ENCODE measurements at regions of chr9 and their contacts with region 1.

Region 1: DNA sequence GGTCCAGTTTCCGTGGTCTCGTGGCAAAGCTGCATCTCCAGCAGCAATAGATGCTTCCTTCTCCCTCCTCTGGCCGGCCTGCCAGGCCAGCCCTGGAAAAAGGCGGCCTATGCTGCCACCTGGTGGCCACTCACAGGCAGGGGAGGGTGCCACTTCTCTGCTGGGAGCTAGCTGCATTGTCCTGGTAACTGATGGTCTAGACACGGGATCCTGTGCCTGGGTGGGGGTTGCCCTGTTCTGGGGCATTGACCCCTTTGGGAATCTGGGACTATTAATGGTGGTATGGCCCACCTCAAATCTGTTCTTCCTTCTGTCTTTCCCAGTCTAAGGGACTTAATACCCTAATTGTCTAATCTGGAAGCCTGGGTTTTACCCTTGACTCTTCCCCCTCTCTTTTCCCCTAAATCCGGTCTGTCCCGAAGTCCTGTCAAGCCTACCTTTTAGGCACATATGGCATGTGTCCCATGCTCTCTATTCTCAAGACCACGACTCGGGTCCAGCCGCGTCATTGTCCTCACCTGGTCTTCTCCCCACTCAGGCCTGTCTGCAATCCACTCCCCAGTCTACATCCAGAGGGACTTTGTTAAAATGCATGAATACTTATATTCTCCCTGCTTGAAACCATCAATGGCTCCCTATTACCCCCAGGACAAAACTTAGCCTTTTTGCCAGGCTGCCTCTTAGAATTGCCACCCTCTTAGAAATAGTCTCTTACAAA is 20.0 kb upstream of the PTGS1 start:
- DNase-seq: peak; percentile 81
- ATAC-seq: peak; percentile 86
- H3K4me3 ChIP-seq: no peak overlapping the region
- H3K4me3 Mint-ChIP-seq: no peak overlapping the region
- H3K27ac ChIP-seq: no peak overlapping the region
- H3K27ac Mint-ChIP-seq: no peak overlapping the region
- H3K4me1 ChIP-seq: peaks cover 9 to 12% of the 10 kb centered on the region in 2 donors
- H3K4me1 Mint-ChIP-seq: peaks cover 6% of the 10 kb centered on the region
- H3K27me3 ChIP-seq: peaks cover 0 to 35% (median 12%) of the 10 kb centered on the region in 4 experiments
- H3K27me3 Mint-ChIP-seq: peaks cover 30% of the 10 kb centered on the region
- CTCF ChIP-seq: peak; percentile 93

Region 2: DNA sequence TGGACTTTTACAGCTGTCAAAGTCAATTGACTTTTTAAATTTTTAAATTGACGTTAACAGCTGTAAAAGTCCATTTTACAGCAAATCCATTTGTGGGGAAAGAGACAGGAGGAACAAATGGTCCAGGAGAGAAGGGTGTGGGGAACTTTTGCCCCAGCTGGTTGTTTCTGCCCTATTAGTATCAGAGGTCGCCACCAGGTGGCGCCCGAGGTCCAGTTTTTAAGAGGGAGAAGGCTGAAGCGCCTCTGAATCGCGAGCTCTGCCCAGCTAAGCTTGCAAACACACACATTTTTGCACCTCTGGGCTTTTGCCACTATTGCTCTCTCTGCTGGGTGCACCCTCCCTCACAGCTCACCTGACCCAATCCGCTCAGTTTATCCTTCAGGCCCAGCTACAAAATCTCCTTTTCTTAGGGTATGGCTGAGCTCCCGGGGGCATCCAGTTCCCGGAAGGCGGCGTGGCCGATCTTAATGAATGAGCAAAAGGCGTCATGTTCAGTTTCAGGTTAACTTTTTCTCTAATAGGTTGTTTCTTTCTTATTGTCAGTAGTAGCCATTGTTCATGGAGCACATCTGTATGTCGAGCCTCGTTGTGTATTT is 251.4 kb before region 1 on chr9:
- CTCF ChIA-PET with region 1: interaction called, 159 read pairs
- POLR2A ChIA-PET with region 1: no interaction called
- intact Hi-C with region 1: loop called (anchors 1 kb)
- DNase-seq: peak; percentile 85
- ATAC-seq: peak; percentile 87
- H3K4me3 ChIP-seq: no peak overlapping the region
- H3K4me3 Mint-ChIP-seq: peak overlapping the region; percentile 30
- H3K27ac ChIP-seq: no peak overlapping the region
- H3K27ac Mint-ChIP-seq: no peak overlapping the region
- H3K4me1 ChIP-seq: peaks cover 10 to 11% of the 10 kb centered on the region in 2 donors
- H3K4me1 Mint-ChIP-seq: peaks cover 12% of the 10 kb centered on the region
- H3K27me3 ChIP-seq: peaks cover 0 to 7% (median 3%) of the 10 kb centered on the region in 4 experiments
- H3K27me3 Mint-ChIP-seq: peaks cover 12% of the 10 kb centered on the region
- CTCF ChIP-seq: peak; percentile 88

Region 3: GRCh38 chr9:122168356-122168755 is 182.4 kb before region 1 on chr9:
- CTCF ChIA-PET with region 1: no interaction called
- POLR2A ChIA-PET with region 1: no interaction called
- intact Hi-C with region 1: no loop called
- DNase-seq: no peak
- ATAC-seq: no peak
- H3K4me3 ChIP-seq: no peak overlapping the region
- H3K4me3 Mint-ChIP-seq: no peak overlapping the region
- H3K27ac ChIP-seq: no peak overlapping the region
- H3K27ac Mint-ChIP-seq: no peak overlapping the region
- H3K4me1 ChIP-seq: no peaks in the 10 kb centered on the region
- H3K4me1 Mint-ChIP-seq: no peaks in the 10 kb centered on the region
- H3K27me3 ChIP-seq: peaks cover 0 to 28% (median 6%) of the 10 kb centered on the region in 4 experiments
- H3K27me3 Mint-ChIP-seq: peaks cover 57% of the 10 kb centered on the region
- CTCF ChIP-seq: no peak

Region 4: GRCh38 chr9:122338994-122339393 is 11.8 kb before region 1 on chr9:
- CTCF ChIA-PET with region 1: interaction called, 20 read pairs
- POLR2A ChIA-PET with region 1: no interaction called
- intact Hi-C with region 1: no loop called
- DNase-seq: no peak
- ATAC-seq: no peak
- H3K4me3 ChIP-seq: no peak overlapping the region
- H3K4me3 Mint-ChIP-seq: no peak overlapping the region
- H3K27ac ChIP-seq: no peak overlapping the region
- H3K27ac Mint-ChIP-seq: no peak overlapping the region
- H3K4me1 ChIP-seq: peaks cover 0 to 10% of the 10 kb centered on the region in 2 donors
- H3K4me1 Mint-ChIP-seq: peaks cover 7% of the 10 kb centered on the region
- H3K27me3 ChIP-seq: peaks cover 0 to 13% (median 0%) of the 10 kb centered on the region in 4 experiments
- H3K27me3 Mint-ChIP-seq: peaks cover 27% of the 10 kb centered on the region
- CTCF ChIP-seq: no peak

Region 5: DNA sequence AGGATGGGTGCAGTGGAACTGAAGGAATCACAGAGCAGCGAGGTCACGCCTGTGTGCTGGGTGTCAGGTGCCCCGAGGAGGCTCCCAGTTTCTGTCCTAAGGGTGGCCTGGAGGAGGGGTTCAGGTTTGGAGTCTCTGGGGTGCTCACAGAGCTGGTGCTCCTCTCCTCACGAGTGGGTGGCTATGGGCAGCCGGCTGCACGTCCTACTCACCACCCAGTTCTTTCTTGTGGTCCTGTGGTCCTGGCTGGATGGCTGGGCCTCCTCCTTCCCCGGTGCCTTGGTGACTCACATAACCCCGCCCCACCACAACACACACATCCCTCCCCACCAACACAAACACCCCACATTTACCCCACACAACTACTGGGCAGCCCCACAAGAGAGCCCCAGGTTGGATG is 10.1 kb after region 1 on chr9:
- CTCF ChIA-PET with region 1: interaction called, 10 read pairs
- POLR2A ChIA-PET with region 1: no interaction called
- intact Hi-C with region 1: no loop called
- DNase-seq: no peak
- ATAC-seq: no peak
- H3K4me3 ChIP-seq: no peak overlapping the region
- H3K4me3 Mint-ChIP-seq: no peak overlapping the region
- H3K27ac ChIP-seq: no peak overlapping the region
- H3K27ac Mint-ChIP-seq: no peak overlapping the region
- H3K4me1 ChIP-seq: no peaks in the 10 kb centered on the region
- H3K4me1 Mint-ChIP-seq: no peaks in the 10 kb centered on the region
- H3K27me3 ChIP-seq: no peaks in the 10 kb centered on the region
- H3K27me3 Mint-ChIP-seq: peaks cover 7% of the 10 kb centered on the region
- CTCF ChIP-seq: no peak

Region 6: GRCh38 chr9:122370869-122371755 is 20.3 kb after region 1 on chr9 and contains the start of gene PTGS1:
- CTCF ChIA-PET with region 1: interaction called, 16 read pairs
- POLR2A ChIA-PET with region 1: interaction called, 5 read pairs
- intact Hi-C with region 1: no loop called
- DNase-seq: peak; percentile 72
- ATAC-seq: peak; percentile 77
- H3K4me3 ChIP-seq: peak within 1 kb of the TSS; percentile 59 to 87 (median 63)
- H3K4me3 Mint-ChIP-seq: peak within 1 kb of the TSS; percentile 91
- H3K27ac ChIP-seq: peak within 1 kb of the TSS; percentile 67 to 76
- H3K27ac Mint-ChIP-seq: peak within 1 kb of the TSS; percentile 82
- H3K4me1 ChIP-seq: peaks cover 25 to 38% of the 10 kb centered on the region in 2 donors
- H3K4me1 Mint-ChIP-seq: peaks cover 46% of the 10 kb centered on the region
- H3K27me3 ChIP-seq: no peaks in the 10 kb centered on the region
- H3K27me3 Mint-ChIP-seq: no peaks in the 10 kb centered on the region
- CTCF ChIP-seq: no peak
- total RNA-seq, gene PTGS1: 9.5 and 10.4 TPM in 2 replicates

Region 7: DNA sequence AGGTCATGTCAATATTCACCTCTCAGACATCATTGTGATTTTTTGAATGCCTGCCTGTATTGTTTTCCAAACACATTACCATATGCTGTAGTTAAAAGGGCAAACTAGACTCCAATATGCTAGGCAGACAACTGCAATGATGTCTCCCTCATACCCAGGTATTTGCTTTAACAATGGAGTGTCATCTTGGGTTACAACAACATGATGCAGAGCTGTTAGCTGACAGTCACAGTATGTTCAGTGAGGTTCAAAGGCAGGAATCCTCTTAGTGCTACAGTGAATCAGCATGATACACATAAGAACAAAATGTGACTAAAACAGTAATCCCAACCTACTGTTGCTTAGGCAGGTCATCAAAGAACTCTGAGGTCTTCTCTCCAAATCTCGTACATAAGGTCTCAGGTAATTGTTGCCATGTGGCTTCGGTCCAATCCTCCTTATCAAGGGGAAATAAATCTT is 102.9 kb after region 1 on chr9:
- CTCF ChIA-PET with region 1: interaction called, 10 read pairs
- POLR2A ChIA-PET with region 1: no interaction called
- intact Hi-C with region 1: loop called (anchors 1 kb)
- DNase-seq: no peak
- ATAC-seq: no peak
- H3K4me3 ChIP-seq: no peak overlapping the region
- H3K4me3 Mint-ChIP-seq: no peak overlapping the region
- H3K27ac ChIP-seq: no peak overlapping the region
- H3K27ac Mint-ChIP-seq: no peak overlapping the region
- H3K4me1 ChIP-seq: no peaks in the 10 kb centered on the region
- H3K4me1 Mint-ChIP-seq: no peaks in the 10 kb centered on the region
- H3K27me3 ChIP-seq: peaks cover 0 to 4% (median 0%) of the 10 kb centered on the region in 4 experiments
- H3K27me3 Mint-ChIP-seq: peaks cover 22% of the 10 kb centered on the region
- CTCF ChIP-seq: no peak

Region 8: DNA sequence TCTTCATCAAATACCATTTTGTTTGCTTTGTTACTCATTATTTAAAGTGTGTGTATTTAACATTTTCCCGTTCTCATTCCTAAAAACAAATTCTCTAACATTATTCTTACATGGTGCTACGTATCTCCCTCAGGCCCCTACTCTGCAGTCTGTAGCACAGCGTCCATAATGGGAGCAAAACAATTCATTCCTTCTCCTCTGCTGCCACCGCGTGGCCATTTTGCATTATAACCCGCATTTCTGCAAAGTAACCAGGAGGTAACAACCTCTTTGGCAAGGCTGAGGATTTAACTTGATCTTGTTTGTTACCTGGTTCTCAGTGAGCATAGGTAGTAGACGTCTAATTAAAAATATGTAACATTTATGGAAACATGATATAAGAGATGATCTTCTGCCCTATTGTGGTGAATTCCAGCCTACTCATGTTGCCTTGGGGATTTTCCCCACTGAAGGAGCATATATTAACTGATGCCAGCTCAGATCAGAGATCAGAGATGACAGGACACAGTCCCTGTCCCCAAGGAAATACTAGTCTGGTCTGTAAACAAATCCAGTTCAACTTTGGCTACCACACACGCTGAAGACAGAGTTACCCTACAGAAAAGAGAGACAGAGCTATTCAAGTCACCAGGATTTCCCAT is 459.6 kb after region 1 on chr9:
- CTCF ChIA-PET with region 1: interaction called, 11 read pairs
- POLR2A ChIA-PET with region 1: no interaction called
- intact Hi-C with region 1: no loop called
- DNase-seq: peak; percentile 82
- ATAC-seq: peak; percentile 91
- H3K4me3 ChIP-seq: no peak overlapping the region
- H3K4me3 Mint-ChIP-seq: no peak overlapping the region
- H3K27ac ChIP-seq: no peak overlapping the region
- H3K27ac Mint-ChIP-seq: no peak overlapping the region
- H3K4me1 ChIP-seq: peaks cover 5 to 8% of the 10 kb centered on the region in 2 donors
- H3K4me1 Mint-ChIP-seq: peaks cover 8% of the 10 kb centered on the region
- H3K27me3 ChIP-seq: no peaks in the 10 kb centered on the region
- H3K27me3 Mint-ChIP-seq: no peaks in the 10 kb centered on the region
- CTCF ChIP-seq: peak; percentile 88